Activated naive CD4-positive, alpha-beta T cell treated with anti-CD3 and anti-CD28 coated beads, Interleukin-2, amount 10 ng/mL, durations not matched to agents 7 days and 5 days (primary cell): ENCODE measurements at regions of chr17 and their contacts with region 1.

Region 1: GRCh38 chr17:76384222-76384986 is at the start of gene SPHK1:
- DNase-seq: peak; percentile 77
- H3K4me3 Mint-ChIP-seq: peak within 1 kb of the TSS; percentile 87
- H3K27ac Mint-ChIP-seq: peak within 1 kb of the TSS; percentile 86
- H3K4me1 Mint-ChIP-seq: peaks cover 19% of the 10 kb centered on the region
- H3K27me3 Mint-ChIP-seq: peaks cover 66% of the 10 kb centered on the region

Region 2: DNA sequence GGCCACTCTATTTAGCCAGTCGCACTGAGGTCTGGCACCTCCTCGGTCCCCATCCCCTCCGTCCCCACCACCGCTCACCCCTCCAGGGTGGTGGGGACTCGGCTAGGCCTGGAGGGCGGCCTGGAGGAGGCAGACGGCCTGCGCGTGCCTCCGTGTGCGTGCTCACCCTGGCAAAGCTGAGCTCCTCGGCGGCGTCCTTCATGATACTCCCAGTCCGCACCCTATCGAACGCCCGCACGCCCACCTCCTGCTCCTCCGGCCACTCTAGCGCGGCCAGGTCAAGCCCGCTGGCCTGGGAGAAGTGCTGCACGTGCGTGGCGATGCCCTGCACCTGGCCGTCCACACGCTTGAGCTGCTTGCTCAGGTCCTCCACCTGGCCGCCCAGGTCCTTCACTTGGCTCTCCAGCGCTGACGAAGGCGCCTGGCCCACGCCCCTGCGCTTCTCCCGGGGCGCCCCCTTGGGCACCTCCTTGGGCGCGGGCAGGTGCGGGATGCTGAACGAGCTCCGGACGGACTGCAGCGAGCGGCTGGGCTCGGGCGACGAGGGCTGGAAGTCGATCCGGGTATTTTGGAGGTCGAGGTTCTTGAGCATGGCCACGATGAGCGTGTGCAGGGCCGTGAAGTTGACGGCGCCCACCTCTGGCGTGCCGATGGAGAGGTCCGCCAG is 77.0 kb before region 1 on chr17:
- CTCF ChIA-PET with region 1: interaction called, 21 read pairs
- DNase-seq: no peak
- H3K4me3 Mint-ChIP-seq: no peak overlapping the region
- H3K27ac Mint-ChIP-seq: no peak overlapping the region
- H3K4me1 Mint-ChIP-seq: peaks cover 2% of the 10 kb centered on the region
- H3K27me3 Mint-ChIP-seq: no peaks in the 10 kb centered on the region

Region 3: GRCh38 chr17:76353599-76354316 is 30.6 kb before region 1 on chr17 and contains the start of gene PRPSAP1:
- CTCF ChIA-PET with region 1: interaction called, 23 read pairs
- DNase-seq: peak; percentile 87
- H3K4me3 Mint-ChIP-seq: peak within 1 kb of the TSS; percentile 87
- H3K27ac Mint-ChIP-seq: peak within 1 kb of the TSS; percentile 97
- H3K4me1 Mint-ChIP-seq: peaks cover 33% of the 10 kb centered on the region
- H3K27me3 Mint-ChIP-seq: peaks cover 23% of the 10 kb centered on the region

Region 4: DNA sequence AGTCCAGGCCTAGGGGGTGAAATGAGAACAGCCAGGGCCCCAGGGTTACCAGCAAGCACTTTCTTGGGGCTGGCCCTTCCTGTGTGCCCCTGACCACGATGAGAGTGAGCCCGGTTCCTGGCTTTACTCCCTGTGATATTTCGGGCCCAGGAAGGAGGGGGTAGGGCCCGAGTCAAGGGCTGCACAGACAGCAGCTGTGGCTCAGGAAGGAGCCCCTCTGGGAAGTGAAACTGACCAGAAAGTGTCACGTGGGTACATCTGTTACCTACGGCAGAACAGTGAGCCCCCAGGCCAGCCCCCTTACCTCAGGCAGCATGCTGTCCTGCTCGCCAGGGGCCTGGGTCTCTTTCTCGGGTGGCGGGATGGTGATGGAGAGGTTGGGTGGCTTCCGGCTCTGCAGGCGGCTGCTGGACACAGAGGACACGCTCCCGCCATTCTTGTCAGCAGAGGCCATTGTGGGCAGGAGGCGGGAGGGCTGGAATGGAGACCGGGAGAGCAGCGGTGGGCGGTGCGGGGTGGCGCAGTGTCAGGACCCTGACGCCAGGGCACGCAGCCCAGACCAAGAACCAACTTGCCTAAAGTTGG is 96.8 kb after region 1 on chr17:
- CTCF ChIA-PET with region 1: no interaction called
- DNase-seq: no peak
- H3K4me3 Mint-ChIP-seq: no peak overlapping the region
- H3K27ac Mint-ChIP-seq: no peak overlapping the region
- H3K4me1 Mint-ChIP-seq: peaks cover 13% of the 10 kb centered on the region
- H3K27me3 Mint-ChIP-seq: no peaks in the 10 kb centered on the region